Activated CD4-positive, alpha-beta T cell treated with anti-CD3 and anti-CD28 coated beads for 36 hours (primary cell): ENCODE measurements at regions of chr1 and their contacts with region 1.

Region 1: DNA sequence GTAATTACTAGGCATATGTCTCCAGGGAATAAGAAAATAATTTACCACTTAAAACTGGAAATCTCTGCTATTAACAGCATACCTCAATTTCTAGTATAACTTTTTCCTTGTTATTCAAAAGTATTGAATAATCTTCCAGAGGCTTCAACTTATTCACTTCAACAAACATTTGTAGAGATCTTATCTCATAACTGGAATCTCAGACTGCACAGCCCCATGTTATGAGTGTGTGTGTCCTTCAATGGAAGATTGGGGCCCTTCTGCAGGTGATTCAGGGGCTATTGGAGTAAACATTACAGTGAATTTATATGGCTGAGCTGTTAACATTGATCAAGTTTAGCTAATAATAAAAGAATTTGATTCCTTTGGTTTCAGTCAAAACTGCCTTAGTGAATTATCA is 946.1 kb downstream of the TTLL7 start:
- DNase-seq: no peak
- ATAC-seq: no peak
- H3K4me3 Mint-ChIP-seq: no peak overlapping the region
- H3K27ac Mint-ChIP-seq: no peak overlapping the region
- H3K4me1 Mint-ChIP-seq: no peaks in the 10 kb centered on the region
- H3K27me3 Mint-ChIP-seq: no peaks in the 10 kb centered on the region

Region 2: GRCh38 chr1:83000286-83000685 is 52.6 kb before region 1 on chr1:
- CTCF ChIA-PET with region 1: no interaction called
- POLR2A ChIA-PET with region 1: no interaction called
- intact Hi-C with region 1: loop called in 1 of 2 experiments (anchors 5 kb)
- DNase-seq: no peak
- ATAC-seq: no peak
- H3K4me3 Mint-ChIP-seq: no peak overlapping the region
- H3K27ac Mint-ChIP-seq: no peak overlapping the region
- H3K4me1 Mint-ChIP-seq: no peaks in the 10 kb centered on the region
- H3K27me3 Mint-ChIP-seq: peaks cover 3% of the 10 kb centered on the region